Activated CD4-positive, alpha-beta memory T cell treated with anti-CD3 and anti-CD28 coated beads, Interleukin-2, amount 10 ng/mL, durations not matched to agents 7 days and 5 days (primary cell): ENCODE measurements at regions of chr15 and their contacts with region 1.

Region 1: GRCh38 chr15:75801859-75802593 is 41.2 kb upstream of the UBE2Q2 start:
- DNase-seq: peak; percentile 84
- H3K4me3 Mint-ChIP-seq: peak overlapping the region; percentile 22
- H3K27ac Mint-ChIP-seq: no peak overlapping the region
- H3K4me1 Mint-ChIP-seq: peaks cover 8% of the 10 kb centered on the region
- H3K27me3 Mint-ChIP-seq: peaks cover 56% of the 10 kb centered on the region

Region 2: DNA sequence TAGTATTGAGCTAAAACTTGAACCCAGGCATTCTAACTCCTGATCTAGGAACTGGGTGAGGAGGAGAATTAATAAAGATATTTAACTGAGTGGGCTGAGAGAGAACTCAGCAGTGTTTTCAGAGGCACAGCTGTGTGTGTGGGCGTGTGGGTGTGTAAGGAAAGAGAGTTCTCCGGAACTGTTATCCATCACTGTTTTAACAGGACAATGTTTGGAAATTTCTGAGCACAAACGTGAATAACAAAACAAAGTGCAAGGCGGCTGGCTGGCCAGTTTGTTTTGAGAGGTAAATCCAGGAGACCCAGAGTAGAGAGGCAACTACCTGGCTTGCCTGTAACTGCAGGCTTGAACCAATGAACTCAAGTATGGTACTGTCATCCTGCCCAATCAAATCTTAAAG is 217.9 kb before region 1 on chr15:
- CTCF ChIA-PET with region 1: no interaction called
- POLR2A ChIA-PET with region 1: no interaction called
- DNase-seq: no peak
- H3K4me3 Mint-ChIP-seq: no peak overlapping the region
- H3K27ac Mint-ChIP-seq: no peak overlapping the region
- H3K4me1 Mint-ChIP-seq: peaks cover 12% of the 10 kb centered on the region
- H3K27me3 Mint-ChIP-seq: no peaks in the 10 kb centered on the region

Region 3: DNA sequence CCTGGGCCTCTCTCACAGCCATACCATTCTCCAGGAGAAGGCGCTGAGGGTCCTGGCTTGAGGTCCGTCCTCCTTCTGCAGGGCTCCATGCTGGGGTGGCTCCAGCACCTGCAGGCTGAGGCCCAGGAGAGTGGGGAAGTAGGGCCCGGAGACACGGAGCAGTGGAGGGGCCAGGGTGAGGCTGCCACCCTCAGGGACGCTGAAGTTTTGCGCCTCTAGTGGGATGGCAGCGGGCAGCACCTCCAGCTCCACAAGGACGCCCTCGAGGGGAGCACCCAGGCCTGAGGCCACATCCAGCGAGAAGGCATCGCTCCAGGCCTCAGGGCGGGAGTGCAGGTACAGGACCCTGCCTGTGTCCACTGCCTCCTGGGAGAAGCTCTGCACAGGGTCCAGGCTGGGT is 116.8 kb before region 1 on chr15:
- CTCF ChIA-PET with region 1: interaction called, 31 read pairs
- POLR2A ChIA-PET with region 1: no interaction called
- DNase-seq: no peak
- H3K4me3 Mint-ChIP-seq: no peak overlapping the region
- H3K27ac Mint-ChIP-seq: no peak overlapping the region
- H3K4me1 Mint-ChIP-seq: no peaks in the 10 kb centered on the region
- H3K27me3 Mint-ChIP-seq: no peaks in the 10 kb centered on the region

Region 4: GRCh38 chr15:75723847-75724660 is 78.0 kb before region 1 on chr15:
- CTCF ChIA-PET with region 1: interaction called, 55 read pairs
- POLR2A ChIA-PET with region 1: no interaction called
- DNase-seq: peak; percentile 54
- H3K4me3 Mint-ChIP-seq: no peak overlapping the region
- H3K27ac Mint-ChIP-seq: no peak overlapping the region
- H3K4me1 Mint-ChIP-seq: peaks cover 3% of the 10 kb centered on the region
- H3K27me3 Mint-ChIP-seq: peaks cover 11% of the 10 kb centered on the region